CD8-positive, alpha-beta T cell (primary cell): ENCODE measurements at regions of chr16 and their contacts with region 1.

Region 1: GRCh38 chr16:53054670-53055485 is at the start of gene CHD9:
- DNase-seq: peak; percentile 53 to 89 (median 72)
- ATAC-seq: peak; percentile 91
- H3K4me3 ChIP-seq: peak within 1 kb of the TSS; percentile 78 to 86
- H3K4me3 Mint-ChIP-seq: peak within 1 kb of the TSS; percentile 87
- H3K27ac ChIP-seq: peak within 1 kb of the TSS; percentile 37 to 61
- H3K27ac Mint-ChIP-seq: peak within 1 kb of the TSS; percentile 77
- H3K4me1 ChIP-seq: peaks cover 18% of the 10 kb centered on the region
- H3K4me1 Mint-ChIP-seq: peaks cover 30% of the 10 kb centered on the region
- H3K27me3 ChIP-seq: no peaks in the 10 kb centered on the region
- H3K27me3 Mint-ChIP-seq: no peaks in the 10 kb centered on the region
- CTCF ChIP-seq: peak; percentile 97
- total RNA-seq, gene CHD9: 23.2 to 23.5 TPM

Region 2: DNA sequence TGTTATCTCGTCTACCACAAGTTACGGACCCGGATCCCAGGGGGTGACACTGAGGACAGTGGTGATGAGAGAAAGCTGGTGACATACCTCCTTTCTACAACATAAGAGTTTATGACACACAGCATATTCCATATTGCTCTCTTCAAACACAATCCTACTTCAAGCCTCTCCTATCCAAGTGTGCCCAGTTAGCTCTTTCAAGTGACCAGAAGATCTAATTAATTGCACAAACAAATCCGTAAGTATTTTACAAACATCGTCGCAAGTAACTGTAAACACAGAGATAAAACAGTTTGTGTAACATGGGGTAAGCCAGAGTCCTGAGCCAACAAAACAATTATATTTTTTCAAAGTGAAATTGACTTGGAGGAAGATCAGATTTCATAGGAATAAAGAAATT is 237.2 kb before region 1 on chr16:
- CTCF ChIA-PET with region 1: no interaction called
- POLR2A ChIA-PET with region 1: no interaction called
- intact Hi-C with region 1: no loop called
- DNase-seq: no peak
- ATAC-seq: no peak
- H3K4me3 ChIP-seq: no peak overlapping the region
- H3K4me3 Mint-ChIP-seq: no peak overlapping the region
- H3K27ac ChIP-seq: no peak overlapping the region
- H3K27ac Mint-ChIP-seq: no peak overlapping the region
- H3K4me1 ChIP-seq: no peaks in the 10 kb centered on the region
- H3K4me1 Mint-ChIP-seq: no peaks in the 10 kb centered on the region
- H3K27me3 ChIP-seq: no peaks in the 10 kb centered on the region
- H3K27me3 Mint-ChIP-seq: no peaks in the 10 kb centered on the region
- CTCF ChIP-seq: no peak

Region 3: GRCh38 chr16:53065461-53066061 is 10.7 kb after region 1 on chr16:
- CTCF ChIA-PET with region 1: interaction called, 31 read pairs
- POLR2A ChIA-PET with region 1: interaction called, 4 read pairs
- intact Hi-C with region 1: no loop called
- DNase-seq: no peak
- ATAC-seq: no peak
- H3K4me3 ChIP-seq: no peak overlapping the region
- H3K4me3 Mint-ChIP-seq: no peak overlapping the region
- H3K27ac ChIP-seq: no peak overlapping the region
- H3K27ac Mint-ChIP-seq: no peak overlapping the region
- H3K4me1 ChIP-seq: peaks cover 38% of the 10 kb centered on the region
- H3K4me1 Mint-ChIP-seq: peaks cover 60% of the 10 kb centered on the region
- H3K27me3 ChIP-seq: no peaks in the 10 kb centered on the region
- H3K27me3 Mint-ChIP-seq: no peaks in the 10 kb centered on the region
- CTCF ChIP-seq: no peak

Region 4: GRCh38 chr16:53123747-53124146 is 68.9 kb after region 1 on chr16:
- CTCF ChIA-PET with region 1: interaction called, 12 read pairs
- POLR2A ChIA-PET with region 1: interaction called, 4 read pairs
- intact Hi-C with region 1: no loop called
- DNase-seq: no peak
- ATAC-seq: no peak
- H3K4me3 ChIP-seq: no peak overlapping the region
- H3K4me3 Mint-ChIP-seq: no peak overlapping the region
- H3K27ac ChIP-seq: no peak overlapping the region
- H3K27ac Mint-ChIP-seq: no peak overlapping the region
- H3K4me1 ChIP-seq: no peaks in the 10 kb centered on the region
- H3K4me1 Mint-ChIP-seq: no peaks in the 10 kb centered on the region
- H3K27me3 ChIP-seq: no peaks in the 10 kb centered on the region
- H3K27me3 Mint-ChIP-seq: no peaks in the 10 kb centered on the region
- CTCF ChIP-seq: no peak

Region 5: DNA sequence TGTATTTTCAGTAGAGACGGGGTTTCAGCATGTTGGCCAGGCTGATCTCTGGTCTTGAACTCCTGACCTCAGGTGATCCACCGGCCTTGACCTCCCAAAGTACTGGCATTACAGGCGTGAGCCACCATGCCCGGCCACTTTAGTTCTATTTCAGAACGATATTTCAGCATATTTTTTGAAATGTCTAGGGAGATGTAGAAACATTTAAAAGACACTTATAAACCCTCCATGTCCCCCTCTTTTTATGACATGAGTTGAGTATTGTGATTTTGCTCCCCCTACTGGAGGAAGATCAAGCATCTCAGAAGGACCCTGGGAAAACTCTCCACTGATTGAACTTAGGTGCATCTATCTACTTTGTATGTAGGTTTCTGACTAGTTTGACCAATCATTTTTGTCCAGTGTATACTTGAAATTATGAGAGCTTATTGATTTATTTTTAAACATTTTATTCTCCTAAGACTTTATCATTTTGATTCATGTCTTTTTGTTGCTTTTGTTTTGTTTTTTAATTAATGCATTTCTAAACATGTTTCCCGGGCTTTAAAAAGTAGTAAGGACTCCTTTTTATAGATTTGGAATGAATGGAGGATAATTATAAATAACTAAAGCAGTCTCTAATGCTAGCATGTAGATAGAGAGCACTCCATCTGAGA is 105.0 kb after region 1 on chr16:
- CTCF ChIA-PET with region 1: interaction called, 103 read pairs
- POLR2A ChIA-PET with region 1: interaction called, 5 read pairs
- intact Hi-C with region 1: loop called (anchors 1 kb)
- DNase-seq: peak in 3 of 9 experiments; percentile 23 to 79 (median 71)
- ATAC-seq: peak; percentile 87
- H3K4me3 ChIP-seq: no peak overlapping the region
- H3K4me3 Mint-ChIP-seq: no peak overlapping the region
- H3K27ac ChIP-seq: no peak overlapping the region
- H3K27ac Mint-ChIP-seq: no peak overlapping the region
- H3K4me1 ChIP-seq: no peaks in the 10 kb centered on the region
- H3K4me1 Mint-ChIP-seq: peaks cover 3% of the 10 kb centered on the region
- H3K27me3 ChIP-seq: no peaks in the 10 kb centered on the region
- H3K27me3 Mint-ChIP-seq: no peaks in the 10 kb centered on the region
- CTCF ChIP-seq: peak; percentile 83

Region 6: GRCh38 chr16:53220585-53220984 is 165.7 kb after region 1 on chr16:
- CTCF ChIA-PET with region 1: interaction called, 8 read pairs
- POLR2A ChIA-PET with region 1: no interaction called
- intact Hi-C with region 1: loop called (anchors 1 kb)
- DNase-seq: peak in 4 of 9 experiments; percentile 12 to 50 (median 30)
- ATAC-seq: peak; percentile 56
- H3K4me3 ChIP-seq: no peak overlapping the region
- H3K4me3 Mint-ChIP-seq: no peak overlapping the region
- H3K27ac ChIP-seq: no peak overlapping the region
- H3K27ac Mint-ChIP-seq: no peak overlapping the region
- H3K4me1 ChIP-seq: no peaks in the 10 kb centered on the region
- H3K4me1 Mint-ChIP-seq: peaks cover 3% of the 10 kb centered on the region
- H3K27me3 ChIP-seq: no peaks in the 10 kb centered on the region
- H3K27me3 Mint-ChIP-seq: no peaks in the 10 kb centered on the region
- CTCF ChIP-seq: peak; percentile 35

Region 7: DNA sequence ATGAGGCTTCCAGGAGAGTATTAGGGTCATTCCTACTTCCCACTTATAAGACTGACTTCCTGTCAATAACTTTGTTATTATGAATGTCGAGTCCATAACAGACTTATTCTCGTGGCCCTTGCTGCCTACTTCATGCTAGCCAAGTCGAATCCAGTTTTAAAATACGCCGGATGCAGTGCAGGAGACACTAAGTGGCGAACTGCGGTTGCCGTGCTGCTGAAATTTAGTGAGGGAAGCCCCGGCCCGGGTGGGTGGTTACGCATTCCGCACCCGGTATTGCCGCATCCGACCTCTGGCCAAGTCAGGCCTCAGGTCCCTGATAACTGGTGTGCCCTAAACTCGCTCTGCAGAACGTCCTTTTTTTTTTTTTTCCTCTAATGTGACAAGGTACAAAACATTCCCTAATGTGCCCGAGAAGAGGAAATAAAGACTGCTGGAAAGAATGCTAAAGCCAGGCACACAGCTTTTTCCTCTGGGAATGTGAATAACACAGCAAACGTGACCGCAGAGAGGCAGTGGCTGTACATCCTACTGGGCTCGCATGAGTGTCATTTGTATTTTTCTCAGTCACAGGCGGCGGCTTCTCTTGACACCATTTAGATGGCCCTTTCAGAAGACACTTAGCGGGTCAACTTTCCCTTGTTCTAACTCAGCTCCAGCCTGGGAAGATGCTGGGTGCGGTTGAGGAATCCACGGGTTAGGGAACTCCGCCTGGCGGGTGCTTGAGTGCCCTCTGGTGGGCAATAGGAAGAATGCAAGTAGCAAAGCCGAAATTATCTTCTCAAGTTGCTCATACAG is 455.2 kb after region 1 on chr16:
- CTCF ChIA-PET with region 1: interaction called, 6 read pairs
- POLR2A ChIA-PET with region 1: interaction called, 3 read pairs
- intact Hi-C with region 1: loop called (anchors 1 kb)
- DNase-seq: peak in 8 of 9 experiments; percentile 31 to 80 (median 54)
- ATAC-seq: peak; percentile 78
- H3K4me3 ChIP-seq: peak overlapping the region; percentile 14 to 41
- H3K4me3 Mint-ChIP-seq: peak overlapping the region; percentile 58
- H3K27ac ChIP-seq: no peak overlapping the region
- H3K27ac Mint-ChIP-seq: no peak overlapping the region
- H3K4me1 ChIP-seq: peaks cover 17% of the 10 kb centered on the region
- H3K4me1 Mint-ChIP-seq: peaks cover 39% of the 10 kb centered on the region
- H3K27me3 ChIP-seq: no peaks in the 10 kb centered on the region
- H3K27me3 Mint-ChIP-seq: no peaks in the 10 kb centered on the region
- CTCF ChIP-seq: peak; percentile 98